Heart right ventricle (tissue), 16 donors: ENCODE measurements at regions of chr6 and their contacts with region 1.

Region 1: GRCh38 chr6:30672445-30673253 is at the start of gene DHX16:
- DNase-seq: peak; percentile 94 to 98
- ATAC-seq: peak; percentile 86 to 95 (median 91)
- H3K4me3 ChIP-seq: peak within 1 kb of the TSS; percentile 70 to 99 (median 89)
- H3K27ac ChIP-seq: peak within 1 kb of the TSS in 9 of 10 donors; percentile 57 to 91 (median 79)
- H3K4me1 ChIP-seq: peaks cover 0 to 30% (median 18%) of the 10 kb centered on the region in 9 donors
- H3K27me3 ChIP-seq: no peaks in the 10 kb centered on the region
- CTCF ChIP-seq: peak; percentile 79 to 93 (median 87)
- total RNA-seq, gene DHX16: 15.9 to 22.9 (median 20.9) TPM

Region 2: DNA sequence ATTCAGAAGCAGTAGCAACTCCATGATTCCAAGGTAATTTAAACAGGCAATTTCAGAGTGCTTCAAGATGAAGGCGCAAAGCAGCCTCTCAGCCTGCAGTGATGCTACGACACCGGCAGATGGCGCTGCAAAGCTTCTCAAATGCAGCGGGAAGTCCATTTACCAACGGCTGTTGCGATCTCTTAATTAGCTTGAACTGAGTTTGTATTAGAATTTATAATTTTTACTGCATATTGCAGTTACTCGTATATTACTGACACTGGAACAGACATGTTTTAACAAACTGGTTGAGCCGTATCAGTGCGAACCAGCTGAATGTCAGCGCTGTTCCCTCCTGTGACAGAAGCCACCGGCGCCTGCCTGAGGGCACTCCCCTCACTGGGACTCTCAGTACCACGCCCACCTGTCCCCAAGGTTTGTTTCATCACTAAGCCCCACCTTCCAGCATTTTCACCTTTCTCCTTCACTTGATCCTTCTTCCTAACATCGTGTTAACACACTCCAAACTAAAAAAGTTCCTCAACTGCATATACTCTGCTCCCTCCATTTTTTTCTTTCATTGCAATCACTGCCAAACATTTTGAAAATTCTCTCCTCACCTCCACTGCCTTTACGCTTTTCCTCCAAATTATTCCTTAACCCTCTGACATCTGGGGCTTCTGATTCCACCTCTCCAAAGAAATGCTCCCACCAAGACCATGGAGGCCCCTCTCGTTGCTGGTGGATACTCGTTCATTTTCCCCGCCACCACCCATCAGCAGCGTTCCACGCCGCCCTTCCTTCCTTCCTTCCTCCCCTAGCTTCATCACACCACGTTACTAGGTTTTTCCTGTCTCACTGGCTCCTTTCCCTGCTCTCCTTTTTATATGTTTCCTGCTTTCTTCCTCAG is 130.9 kb before region 1 on chr6:
- intact Hi-C with region 1: loop called in 1 of 10 experiments (anchors 5 kb)
- DNase-seq: peak; percentile 63 to 73
- ATAC-seq: peak; percentile 57 to 84 (median 78)
- H3K4me3 ChIP-seq: peak overlapping the region in 9 of 10 donors; percentile 14 to 52 (median 41)
- H3K27ac ChIP-seq: peak overlapping the region; percentile 13 to 71 (median 64)
- H3K4me1 ChIP-seq: peaks cover 3 to 27% (median 17%) of the 10 kb centered on the region in 9 donors
- H3K27me3 ChIP-seq: peaks cover 0 to 7% (median 0%) of the 10 kb centered on the region in 7 donors
- CTCF ChIP-seq: peak; percentile 93 to 99 (median 99)

Region 3: GRCh38 chr6:30601815-30602641 is 70.6 kb before region 1 on chr6:
- intact Hi-C with region 1: no loop called
- DNase-seq: no peak
- ATAC-seq: peak in 6 of 8 donors; percentile 8 to 25 (median 14)
- H3K4me3 ChIP-seq: no peak overlapping the region
- H3K27ac ChIP-seq: no peak overlapping the region
- H3K4me1 ChIP-seq: peaks cover 0 to 15% (median 0%) of the 10 kb centered on the region in 9 donors
- H3K27me3 ChIP-seq: no peaks in the 10 kb centered on the region
- CTCF ChIP-seq: no peak

Region 4: GRCh38 chr6:30626484-30627366 is 45.9 kb before region 1 on chr6 and contains the start of gene ATAT1:
- intact Hi-C with region 1: loop called in 2 of 10 experiments (anchors 5 kb)
- DNase-seq: peak; percentile 89 to 91
- ATAC-seq: peak; percentile 94 to 99 (median 97)
- H3K4me3 ChIP-seq: peak within 1 kb of the TSS; percentile 38 to 86 (median 60)
- H3K27ac ChIP-seq: peak within 1 kb of the TSS; percentile 74 to 94 (median 84)
- H3K4me1 ChIP-seq: peaks cover 3 to 20% (median 10%) of the 10 kb centered on the region in 9 donors
- H3K27me3 ChIP-seq: no peaks in the 10 kb centered on the region
- CTCF ChIP-seq: peak in 7 of 9 donors; percentile 16 to 63 (median 48)
- total RNA-seq, gene ATAT1: 1.8 to 4.6 (median 2.8) TPM

Region 5: GRCh38 chr6:30742316-30743098 is 69.9 kb after region 1 on chr6 and contains the start of gene FLOT1:
- intact Hi-C with region 1: no loop called
- DNase-seq: peak; percentile 96 to 98
- ATAC-seq: peak; percentile 83 to 94 (median 90)
- H3K4me3 ChIP-seq: peak within 1 kb of the TSS; percentile 63 to 95 (median 82)
- H3K27ac ChIP-seq: peak within 1 kb of the TSS; percentile 91 to 100 (median 96)
- H3K4me1 ChIP-seq: peaks cover 11 to 63% (median 52%) of the 10 kb centered on the region in 9 donors
- H3K27me3 ChIP-seq: no peaks in the 10 kb centered on the region
- CTCF ChIP-seq: peak in 1 of 9 donors; percentile 18
- total RNA-seq, gene FLOT1: 158 to 280 (median 184) TPM